CD8-positive, alpha-beta memory T cell (primary cell): ENCODE measurements at regions of chr18 and their contacts with region 1.

Region 1: DNA sequence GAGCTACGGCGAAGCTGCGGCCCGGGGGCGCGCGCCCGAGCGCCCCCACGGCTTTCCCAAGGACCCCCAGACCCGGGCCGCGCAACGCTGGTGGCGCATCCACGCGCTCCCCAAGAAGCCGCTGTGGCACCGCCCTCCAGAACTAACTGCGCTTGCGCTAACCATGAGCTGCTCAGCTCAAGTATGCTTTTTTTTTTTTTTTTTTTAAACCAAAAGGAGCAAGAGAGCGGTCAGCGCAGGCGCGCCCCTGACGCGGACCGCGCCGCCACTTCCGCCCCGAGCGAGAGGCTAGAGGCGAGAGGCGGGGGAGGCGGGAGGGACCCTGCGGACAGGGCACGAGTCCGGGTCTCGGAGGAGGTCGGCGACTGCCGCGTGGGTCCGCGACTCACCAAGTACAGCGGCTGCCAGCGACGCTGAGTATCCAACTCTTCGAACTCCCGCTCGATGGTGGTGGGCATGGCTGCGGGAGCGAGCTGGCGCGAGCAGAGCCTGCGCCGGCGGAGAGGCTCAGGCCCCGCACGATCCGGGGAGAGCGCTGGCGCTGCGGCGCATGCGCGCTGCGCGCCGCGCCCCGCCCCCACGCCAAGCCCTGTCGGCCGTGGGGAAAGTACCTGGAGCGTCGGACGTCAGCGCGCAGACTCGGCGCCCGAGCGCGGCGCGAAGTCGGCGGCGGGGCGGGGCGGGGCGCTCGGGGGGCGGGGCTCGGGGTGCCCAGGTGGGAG is at the start of gene PTPN2:
- DNase-seq: peak; percentile 85 to 97 (median 95)
- H3K4me3 ChIP-seq: peak within 1 kb of the TSS; percentile 76
- H3K4me3 Mint-ChIP-seq: peak within 1 kb of the TSS; percentile 91 to 97 (median 94)
- H3K27ac ChIP-seq: peak within 1 kb of the TSS; percentile 97
- H3K27ac Mint-ChIP-seq: peak within 1 kb of the TSS; percentile 87 to 99 (median 98)
- H3K4me1 ChIP-seq: peaks cover 50% of the 10 kb centered on the region
- H3K4me1 Mint-ChIP-seq: peaks cover 55 to 72% (median 67%) of the 10 kb centered on the region in 3 donors
- H3K27me3 ChIP-seq: no peaks in the 10 kb centered on the region
- H3K27me3 Mint-ChIP-seq: peaks cover 0 to 9% of the 10 kb centered on the region in 2 donors
- total RNA-seq, gene PTPN2: 52.6 to 60.3 TPM

Region 2: GRCh38 chr18:12376718-12377555 is 506.9 kb before region 1 on chr18 and contains the start of gene AFG3L2:
- CTCF ChIA-PET with region 1: no interaction called
- POLR2A ChIA-PET with region 1: interaction called, 18 read pairs
- DNase-seq: peak; percentile 100
- H3K4me3 ChIP-seq: peak within 1 kb of the TSS; percentile 89
- H3K4me3 Mint-ChIP-seq: peak within 1 kb of the TSS; percentile 89 to 96 (median 89)
- H3K27ac ChIP-seq: peak within 1 kb of the TSS; percentile 95
- H3K27ac Mint-ChIP-seq: peak within 1 kb of the TSS; percentile 88 to 98 (median 95)
- H3K4me1 ChIP-seq: peaks cover 45% of the 10 kb centered on the region
- H3K4me1 Mint-ChIP-seq: peaks cover 42 to 50% (median 46%) of the 10 kb centered on the region in 3 donors
- H3K27me3 ChIP-seq: no peaks in the 10 kb centered on the region
- H3K27me3 Mint-ChIP-seq: no peaks in the 10 kb centered on the region
- total RNA-seq, gene AFG3L2: 75.6 to 75.8 TPM

Region 3: DNA sequence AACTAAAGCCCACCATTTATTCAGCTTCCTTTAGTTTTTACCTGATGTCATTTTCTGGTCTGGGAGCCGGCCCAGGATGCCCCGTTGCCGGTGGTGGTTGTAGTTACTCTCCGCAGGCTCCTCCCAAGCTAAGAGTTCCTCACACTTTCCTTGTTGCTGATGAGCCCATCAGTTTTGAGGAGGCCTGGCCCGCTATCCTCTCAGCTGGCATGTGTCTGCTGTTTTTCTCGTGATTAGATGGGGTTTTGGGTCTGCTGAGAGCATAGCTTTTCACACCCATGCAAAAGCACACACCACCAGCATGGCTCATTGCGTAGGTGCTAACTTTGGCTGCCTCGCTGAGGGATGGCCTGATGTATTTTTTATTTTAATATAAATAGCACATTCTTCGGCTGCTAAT is 108.9 kb before region 1 on chr18:
- CTCF ChIA-PET with region 1: interaction called, 3 read pairs
- POLR2A ChIA-PET with region 1: interaction called, 13 read pairs
- DNase-seq: peak in 1 of 5 donors; percentile 53
- H3K4me3 ChIP-seq: peak overlapping the region; percentile 68
- H3K4me3 Mint-ChIP-seq: peak overlapping the region; percentile 80 to 97 (median 93)
- H3K27ac ChIP-seq: peak overlapping the region; percentile 70
- H3K27ac Mint-ChIP-seq: peak overlapping the region; percentile 47 to 94 (median 86)
- H3K4me1 ChIP-seq: no peaks in the 10 kb centered on the region
- H3K4me1 Mint-ChIP-seq: peaks cover 19 to 24% (median 23%) of the 10 kb centered on the region in 3 donors
- H3K27me3 ChIP-seq: no peaks in the 10 kb centered on the region
- H3K27me3 Mint-ChIP-seq: peaks cover 0 to 2% of the 10 kb centered on the region in 2 donors

Region 4: DNA sequence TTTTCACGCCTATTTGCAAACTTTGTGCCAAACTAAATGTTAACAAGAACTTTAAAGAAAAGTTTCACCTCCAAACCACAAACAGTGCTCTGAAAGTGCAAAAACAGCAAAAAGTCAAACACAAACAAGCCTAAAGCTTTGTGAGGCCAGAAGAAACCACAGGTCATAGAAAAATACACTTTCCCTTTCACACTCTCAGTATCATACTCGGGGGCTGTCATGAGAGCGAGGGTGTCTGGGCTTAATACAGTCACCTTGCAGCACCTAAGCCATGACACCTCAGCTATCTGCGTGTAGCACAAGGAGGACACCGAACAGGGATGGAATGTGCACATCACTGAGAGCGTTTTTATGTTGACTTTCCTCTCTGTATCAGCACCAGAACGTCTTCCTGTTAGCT is 37.3 kb after region 1 on chr18:
- CTCF ChIA-PET with region 1: interaction called, 5 read pairs
- POLR2A ChIA-PET with region 1: interaction called, 16 read pairs
- DNase-seq: peak in 4 of 5 donors; percentile 29 to 79 (median 53)
- H3K4me3 ChIP-seq: peak overlapping the region; percentile 14
- H3K4me3 Mint-ChIP-seq: peak overlapping the region; percentile 42 to 80 (median 72)
- H3K27ac ChIP-seq: peak overlapping the region; percentile 48
- H3K27ac Mint-ChIP-seq: peak overlapping the region; percentile 70 to 91 (median 81)
- H3K4me1 ChIP-seq: peaks cover 6% of the 10 kb centered on the region
- H3K4me1 Mint-ChIP-seq: peaks cover 21 to 36% (median 29%) of the 10 kb centered on the region in 3 donors
- H3K27me3 ChIP-seq: no peaks in the 10 kb centered on the region
- H3K27me3 Mint-ChIP-seq: no peaks in the 10 kb centered on the region

Region 5: GRCh38 chr18:12990967-12991838 is 107.4 kb after region 1 on chr18 and contains the start of gene CEP192:
- CTCF ChIA-PET with region 1: no interaction called
- POLR2A ChIA-PET with region 1: interaction called, 17 read pairs
- DNase-seq: peak; percentile 95 to 98 (median 98)
- H3K4me3 ChIP-seq: peak within 1 kb of the TSS; percentile 78
- H3K4me3 Mint-ChIP-seq: peak within 1 kb of the TSS; percentile 93 to 100 (median 97)
- H3K27ac ChIP-seq: peak within 1 kb of the TSS; percentile 79
- H3K27ac Mint-ChIP-seq: peak within 1 kb of the TSS; percentile 86 to 97 (median 94)
- H3K4me1 ChIP-seq: peaks cover 42% of the 10 kb centered on the region
- H3K4me1 Mint-ChIP-seq: peaks cover 15 to 20% (median 16%) of the 10 kb centered on the region in 3 donors
- H3K27me3 ChIP-seq: no peaks in the 10 kb centered on the region
- H3K27me3 Mint-ChIP-seq: no peaks in the 10 kb centered on the region
- total RNA-seq, gene CEP192: 21.9 to 24.3 TPM